PC-9 (cell line): ENCODE measurements at regions of chr7 and their contacts with region 1.

Region 1: DNA sequence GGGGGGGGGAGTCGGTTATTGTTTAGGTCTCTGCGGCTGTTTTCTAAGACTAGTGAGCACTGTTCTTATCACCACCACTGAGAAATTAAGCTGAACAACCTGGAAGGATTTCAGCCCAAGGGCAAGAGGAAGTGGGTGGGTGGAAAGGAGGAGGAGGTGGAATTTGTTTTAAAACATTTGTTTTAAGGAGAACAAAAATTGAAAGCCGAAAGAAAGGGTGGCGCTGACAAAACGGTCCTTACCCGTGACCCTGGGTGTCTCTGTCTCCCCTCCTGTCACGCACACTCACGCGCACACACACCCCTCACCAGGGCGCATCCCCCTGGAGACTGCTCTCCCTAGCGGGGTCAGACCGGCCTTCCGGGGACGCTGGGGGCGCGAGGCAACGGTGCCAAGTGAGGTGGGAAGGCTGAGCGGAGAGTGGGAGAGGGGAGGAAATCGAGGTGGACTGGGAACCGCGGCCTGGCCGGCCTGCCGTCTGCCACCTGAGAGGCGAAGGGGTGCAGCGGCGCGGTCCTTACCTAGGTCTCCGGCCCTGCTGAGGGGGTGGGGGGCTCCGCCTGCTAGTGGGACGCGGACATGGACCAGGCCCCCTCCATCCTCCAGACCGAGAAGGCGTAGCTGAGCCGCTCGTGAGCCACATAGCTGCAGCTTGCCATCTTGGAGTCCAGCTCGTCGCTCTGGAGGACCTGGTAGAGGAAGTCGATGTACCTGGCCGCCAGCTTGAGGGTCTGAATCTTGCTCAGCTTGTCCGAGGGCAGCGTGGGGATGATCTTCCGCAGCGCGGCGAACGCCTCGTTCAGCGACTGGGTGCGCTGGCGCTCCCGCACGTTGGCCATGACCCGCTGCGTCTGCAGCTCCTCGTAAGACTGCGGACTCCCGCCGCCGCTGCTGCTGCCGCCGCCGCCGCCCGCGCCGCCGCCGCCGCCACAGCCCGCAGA is 1.0 kb downstream of the TWIST1 start:
- DNase-seq: peak; percentile 17 to 24
- H3K4me3 ChIP-seq: peak overlapping the region; percentile 51
- H3K27ac ChIP-seq: no peak overlapping the region
- H3K4me1 ChIP-seq: no peaks in the 10 kb centered on the region
- H3K27me3 ChIP-seq: no peaks in the 10 kb centered on the region
- CTCF ChIP-seq: no peak

Region 2: GRCh38 chr7:18200855-18201254 is 915.6 kb before region 1 on chr7:
- CTCF ChIA-PET with region 1: interaction called, 13 read pairs
- POLR2A ChIA-PET with region 1: no interaction called
- intact Hi-C with region 1: no loop called
- DNase-seq: no peak
- H3K4me3 ChIP-seq: no peak overlapping the region
- H3K27ac ChIP-seq: no peak overlapping the region
- H3K4me1 ChIP-seq: no peaks in the 10 kb centered on the region
- H3K27me3 ChIP-seq: no peaks in the 10 kb centered on the region
- CTCF ChIP-seq: no peak

Region 3: DNA sequence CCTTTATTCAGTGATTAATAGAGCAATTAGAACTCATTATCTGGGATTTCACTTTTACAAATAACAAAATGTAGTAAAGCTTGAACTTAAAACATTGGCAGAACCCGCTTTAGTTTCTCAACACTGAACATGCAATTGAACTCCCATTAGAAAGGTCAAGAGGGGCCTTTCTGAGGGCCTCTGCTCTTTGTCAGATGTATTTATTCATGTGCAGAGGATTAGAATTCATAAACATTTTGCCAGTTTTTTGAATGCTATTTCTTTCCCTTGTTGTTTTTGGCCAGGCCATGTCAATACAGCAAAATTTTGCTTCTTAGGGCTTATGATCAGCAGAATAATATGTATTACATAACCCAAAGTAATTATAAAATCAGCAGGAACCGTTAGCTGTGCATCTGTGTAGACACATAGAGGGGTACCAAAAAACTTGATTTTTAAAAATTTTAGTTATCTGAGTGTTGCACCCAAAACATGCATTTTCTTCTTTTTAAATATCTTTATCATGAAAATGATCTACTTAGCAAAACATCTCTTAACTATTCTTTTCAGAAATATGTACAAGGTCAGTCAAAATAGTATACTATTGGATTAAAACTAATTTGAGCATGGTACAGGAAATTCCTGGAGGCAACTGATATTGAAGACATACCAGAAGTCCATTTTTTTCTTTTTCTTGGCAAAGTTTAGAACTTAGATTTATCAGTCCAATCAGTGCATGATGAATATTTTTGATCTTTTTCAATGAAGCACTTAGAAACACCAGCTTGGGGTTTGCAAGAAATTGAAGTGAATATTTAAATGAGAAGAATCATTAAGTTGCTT is 176.4 kb before region 1 on chr7:
- CTCF ChIA-PET with region 1: interaction called, 10 read pairs
- POLR2A ChIA-PET with region 1: no interaction called
- intact Hi-C with region 1: no loop called
- DNase-seq: no peak
- H3K4me3 ChIP-seq: no peak overlapping the region
- H3K27ac ChIP-seq: no peak overlapping the region
- H3K4me1 ChIP-seq: no peaks in the 10 kb centered on the region
- H3K27me3 ChIP-seq: no peaks in the 10 kb centered on the region
- CTCF ChIP-seq: no peak

Region 4: GRCh38 chr7:19079066-19079465 is 37.4 kb before region 1 on chr7:
- CTCF ChIA-PET with region 1: interaction called, 7 read pairs
- POLR2A ChIA-PET with region 1: interaction called, 17 read pairs
- intact Hi-C with region 1: no loop called
- DNase-seq: peak; percentile 20 to 50
- H3K4me3 ChIP-seq: peak overlapping the region; percentile 38; the same call in 1 of the 2 replicates
- H3K27ac ChIP-seq: peak overlapping the region; percentile 69
- H3K4me1 ChIP-seq: peaks cover 22% of the 10 kb centered on the region
- H3K27me3 ChIP-seq: no peaks in the 10 kb centered on the region
- CTCF ChIP-seq: no peak